Activated CD4-positive, alpha-beta T cell treated with anti-CD3 and anti-CD28 coated beads, Interleukin-2, amount 10 ng/mL, durations not matched to agents 24 days and 14 days (primary cell): ENCODE measurements at regions of chr1 and their contacts with region 1.

Region 1: GRCh38 chr1:117512743-117513321 is 93.0 kb upstream of the TENT5C start:
- DNase-seq: no peak
- H3K4me3 Mint-ChIP-seq: no peak overlapping the region
- H3K27ac Mint-ChIP-seq: no peak overlapping the region
- H3K4me1 Mint-ChIP-seq: peaks cover 2% of the 10 kb centered on the region
- H3K27me3 Mint-ChIP-seq: no peaks in the 10 kb centered on the region

Region 2: DNA sequence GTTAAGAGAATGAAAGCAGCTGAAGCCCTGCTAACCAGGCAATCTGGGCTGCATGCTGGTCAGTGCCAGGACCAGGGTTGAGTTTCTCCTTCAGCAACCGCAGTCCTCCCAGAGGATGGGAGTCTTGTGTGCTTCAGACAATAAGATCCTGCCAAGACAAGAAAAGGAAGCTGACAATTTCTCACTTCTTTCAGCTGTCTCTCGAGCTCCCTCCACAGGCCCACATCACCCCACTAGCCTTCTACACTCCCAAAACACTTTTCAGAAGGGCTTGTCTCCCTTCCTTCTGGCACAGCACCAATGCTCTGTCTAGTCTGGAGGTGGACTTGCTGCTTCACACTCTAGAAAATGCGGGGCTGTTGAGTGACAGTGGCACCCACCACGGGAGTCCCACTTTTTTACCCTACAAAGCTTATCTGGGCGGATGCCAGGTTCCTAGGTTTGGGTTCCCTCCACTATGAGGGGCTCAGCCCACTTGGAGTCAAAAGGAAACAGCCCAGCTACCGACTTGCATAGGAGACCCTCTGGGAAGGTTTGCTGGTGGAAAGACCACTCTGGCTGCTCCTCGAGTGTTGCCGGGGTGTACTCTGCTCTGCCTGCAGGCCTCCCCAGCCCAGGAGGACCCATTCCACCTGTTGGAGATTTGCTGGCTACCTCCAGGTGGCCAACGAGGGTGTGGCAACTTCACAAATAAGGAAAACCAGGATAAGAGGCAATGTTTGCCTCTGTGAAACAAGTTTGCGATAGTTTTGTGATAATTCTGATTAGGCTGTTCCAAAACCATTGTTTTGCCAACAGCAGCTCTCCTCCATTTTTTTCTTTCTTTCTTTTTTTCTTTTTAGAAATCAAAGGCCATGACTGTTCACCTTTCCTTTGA is 161.9 kb after region 1 on chr1:
- intact Hi-C with region 1: loop called (anchors 1 kb)
- DNase-seq: peak; percentile 85
- H3K4me3 Mint-ChIP-seq: no peak overlapping the region
- H3K27ac Mint-ChIP-seq: no peak overlapping the region
- H3K4me1 Mint-ChIP-seq: peaks cover 21% of the 10 kb centered on the region
- H3K27me3 Mint-ChIP-seq: peaks cover 22% of the 10 kb centered on the region

Region 3: GRCh38 chr1:117821782-117822447 is 309.1 kb after region 1 on chr1:
- intact Hi-C with region 1: no loop called
- DNase-seq: no peak
- H3K4me3 Mint-ChIP-seq: no peak overlapping the region
- H3K27ac Mint-ChIP-seq: no peak overlapping the region
- H3K4me1 Mint-ChIP-seq: no peaks in the 10 kb centered on the region
- H3K27me3 Mint-ChIP-seq: peaks cover 5% of the 10 kb centered on the region

Region 4: DNA sequence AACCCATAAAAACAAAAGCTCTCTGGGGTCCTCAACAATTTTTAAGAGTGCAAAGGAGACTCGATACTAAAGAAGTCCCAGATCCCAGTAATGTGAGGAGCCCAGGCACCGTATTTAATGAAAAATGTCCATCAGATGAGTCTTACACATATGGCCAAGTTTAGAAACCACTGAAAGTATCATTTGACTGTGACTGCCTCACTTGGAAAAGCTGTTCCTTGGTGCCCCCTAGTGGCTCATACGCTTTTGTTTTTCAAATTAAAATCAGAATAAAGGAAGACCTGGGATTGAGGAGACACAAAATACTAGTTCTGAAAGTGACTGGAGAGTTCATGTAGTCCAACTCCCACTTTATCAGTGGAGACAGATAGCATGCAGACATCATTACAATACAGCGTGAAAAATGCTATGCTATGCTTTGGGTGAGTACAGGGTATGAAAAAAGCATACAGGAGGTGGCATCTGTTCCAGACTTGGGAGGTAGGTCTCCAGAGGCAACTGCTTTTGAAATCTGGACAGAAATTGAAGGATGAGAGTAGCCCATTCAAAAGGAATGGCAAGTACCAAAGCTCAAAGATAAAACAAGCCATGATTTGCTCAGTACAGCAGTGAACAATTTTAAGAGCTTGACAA is 382.8 kb after region 1 on chr1:
- intact Hi-C with region 1: loop called (anchors 2 kb)
- DNase-seq: peak; percentile 88
- H3K4me3 Mint-ChIP-seq: no peak overlapping the region
- H3K27ac Mint-ChIP-seq: no peak overlapping the region
- H3K4me1 Mint-ChIP-seq: no peaks in the 10 kb centered on the region
- H3K27me3 Mint-ChIP-seq: no peaks in the 10 kb centered on the region

Region 5: GRCh38 chr1:118084400-118084799 is 571.6 kb after region 1 on chr1:
- intact Hi-C with region 1: no loop called
- DNase-seq: no peak
- H3K4me3 Mint-ChIP-seq: no peak overlapping the region
- H3K27ac Mint-ChIP-seq: no peak overlapping the region
- H3K4me1 Mint-ChIP-seq: peaks cover 7% of the 10 kb centered on the region
- H3K27me3 Mint-ChIP-seq: peaks cover 13% of the 10 kb centered on the region